Activated CD4-positive, alpha-beta T cell treated with anti-CD3 and anti-CD28 coated beads for 36 hours (primary cell): ENCODE measurements at regions of chr16 and their contacts with region 1.

Region 1: DNA sequence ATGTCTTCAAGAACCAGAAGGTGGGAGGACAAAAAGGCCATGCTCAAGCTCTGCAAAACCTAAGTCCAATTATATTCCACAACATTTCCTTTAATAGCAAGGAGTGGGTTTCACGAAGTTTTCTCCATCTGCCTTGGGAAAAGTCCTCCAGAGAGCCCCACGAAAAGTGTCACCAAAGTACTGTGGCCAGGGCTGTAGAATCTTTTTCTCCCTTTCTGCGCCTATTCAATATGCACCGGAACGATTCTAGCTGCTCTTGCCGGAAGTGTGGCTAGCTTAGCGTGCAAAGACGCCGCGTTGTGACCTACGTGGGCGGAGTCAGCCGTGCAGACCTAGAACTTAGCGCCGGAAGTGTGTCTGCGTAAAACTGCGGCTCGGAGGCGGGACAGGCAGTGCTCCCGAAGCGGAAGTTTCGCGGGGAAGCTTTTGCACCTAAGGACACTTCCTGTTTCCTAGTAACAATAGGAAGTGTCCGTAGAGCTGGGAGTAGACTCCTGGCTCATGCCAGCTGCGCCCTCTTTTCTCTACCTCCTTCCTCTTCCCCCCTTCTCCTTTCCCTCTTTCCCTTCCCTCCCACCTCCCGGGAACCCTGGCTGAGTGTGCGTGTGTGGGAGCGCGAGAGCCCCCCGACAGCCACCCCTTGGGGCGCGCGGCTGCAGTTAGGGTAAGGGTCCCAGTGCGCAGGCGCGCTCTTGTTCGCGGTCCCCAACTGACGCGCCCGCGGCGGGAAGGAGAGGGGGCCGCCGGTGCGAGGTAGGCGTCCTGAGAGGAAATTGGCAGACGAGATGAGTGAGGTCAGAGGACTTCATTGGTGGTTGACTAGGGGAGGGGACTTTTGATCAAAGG is at the starts of genes ZNF646 and ZNF668:
- DNase-seq: peak; percentile 99
- ATAC-seq: peak; percentile 83
- H3K4me3 Mint-ChIP-seq: peak within 1 kb of the TSS; percentile 97
- H3K27ac Mint-ChIP-seq: peak within 1 kb of the TSS; percentile 98
- H3K4me1 Mint-ChIP-seq: peaks cover 30% of the 10 kb centered on the region
- H3K27me3 Mint-ChIP-seq: no peaks in the 10 kb centered on the region
- total RNA-seq, gene ZNF646: 21.3 to 25.8 TPM
- total RNA-seq, gene ZNF668: 9.2 to 9.9 TPM

Region 2: DNA sequence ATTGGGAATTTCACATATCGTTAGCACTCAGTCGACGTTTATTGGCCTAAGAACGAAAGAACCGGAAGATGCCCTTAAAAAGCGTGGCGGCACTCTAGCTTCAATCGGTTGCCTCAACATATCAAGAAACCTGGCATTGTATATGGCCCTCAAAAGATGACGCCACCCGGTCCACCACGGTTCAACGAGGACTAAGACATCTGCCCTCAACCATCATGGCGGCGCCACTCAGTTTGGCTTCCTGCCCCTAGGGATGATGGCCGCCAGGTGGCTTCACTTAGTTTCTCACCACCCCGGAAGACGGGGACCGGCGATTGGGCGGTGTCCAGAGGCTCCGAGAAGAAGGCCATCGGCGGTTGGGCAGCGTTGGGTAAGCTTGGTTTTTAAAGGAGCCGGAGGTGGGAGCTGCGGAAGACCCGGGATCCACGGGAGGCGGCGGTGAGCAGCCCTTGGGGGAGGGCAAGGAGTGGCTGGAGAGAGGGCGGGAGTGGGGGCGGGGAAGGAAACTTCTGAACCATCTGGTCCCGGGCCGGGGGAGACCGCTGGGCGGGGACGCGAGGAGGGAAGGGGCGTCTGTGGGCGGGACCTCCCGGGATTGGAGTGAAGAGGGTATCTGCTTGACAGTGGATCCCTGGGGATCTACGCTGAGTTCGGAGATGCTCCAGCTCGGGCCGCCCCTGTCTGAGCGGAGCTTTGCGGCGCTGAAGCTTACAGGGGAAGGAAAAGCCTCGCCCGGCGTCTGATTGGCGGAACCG is 423.6 kb before region 1 on chr16 and contains the start of gene PRR14:
- CTCF ChIA-PET with region 1: no interaction called
- POLR2A ChIA-PET with region 1: no interaction called
- intact Hi-C with region 1: loop called in 1 of 2 experiments (anchors 2 kb)
- DNase-seq: peak; percentile 100
- ATAC-seq: peak; percentile 82
- H3K4me3 Mint-ChIP-seq: peak within 1 kb of the TSS; percentile 95
- H3K27ac Mint-ChIP-seq: peak within 1 kb of the TSS; percentile 97
- H3K4me1 Mint-ChIP-seq: peaks cover 21% of the 10 kb centered on the region
- H3K27me3 Mint-ChIP-seq: no peaks in the 10 kb centered on the region
- total RNA-seq, gene PRR14: 76.8 to 77.8 TPM

Region 3: GRCh38 chr16:30874821-30875717 is 199.1 kb before region 1 on chr16:
- CTCF ChIA-PET with region 1: no interaction called
- POLR2A ChIA-PET with region 1: no interaction called
- intact Hi-C with region 1: loop called in 1 of 2 experiments (anchors 1 kb)
- DNase-seq: peak; percentile 94
- ATAC-seq: peak; percentile 82
- H3K4me3 Mint-ChIP-seq: peak overlapping the region; percentile 87
- H3K27ac Mint-ChIP-seq: peak overlapping the region; percentile 93
- H3K4me1 Mint-ChIP-seq: peaks cover 24% of the 10 kb centered on the region
- H3K27me3 Mint-ChIP-seq: no peaks in the 10 kb centered on the region

Region 4: DNA sequence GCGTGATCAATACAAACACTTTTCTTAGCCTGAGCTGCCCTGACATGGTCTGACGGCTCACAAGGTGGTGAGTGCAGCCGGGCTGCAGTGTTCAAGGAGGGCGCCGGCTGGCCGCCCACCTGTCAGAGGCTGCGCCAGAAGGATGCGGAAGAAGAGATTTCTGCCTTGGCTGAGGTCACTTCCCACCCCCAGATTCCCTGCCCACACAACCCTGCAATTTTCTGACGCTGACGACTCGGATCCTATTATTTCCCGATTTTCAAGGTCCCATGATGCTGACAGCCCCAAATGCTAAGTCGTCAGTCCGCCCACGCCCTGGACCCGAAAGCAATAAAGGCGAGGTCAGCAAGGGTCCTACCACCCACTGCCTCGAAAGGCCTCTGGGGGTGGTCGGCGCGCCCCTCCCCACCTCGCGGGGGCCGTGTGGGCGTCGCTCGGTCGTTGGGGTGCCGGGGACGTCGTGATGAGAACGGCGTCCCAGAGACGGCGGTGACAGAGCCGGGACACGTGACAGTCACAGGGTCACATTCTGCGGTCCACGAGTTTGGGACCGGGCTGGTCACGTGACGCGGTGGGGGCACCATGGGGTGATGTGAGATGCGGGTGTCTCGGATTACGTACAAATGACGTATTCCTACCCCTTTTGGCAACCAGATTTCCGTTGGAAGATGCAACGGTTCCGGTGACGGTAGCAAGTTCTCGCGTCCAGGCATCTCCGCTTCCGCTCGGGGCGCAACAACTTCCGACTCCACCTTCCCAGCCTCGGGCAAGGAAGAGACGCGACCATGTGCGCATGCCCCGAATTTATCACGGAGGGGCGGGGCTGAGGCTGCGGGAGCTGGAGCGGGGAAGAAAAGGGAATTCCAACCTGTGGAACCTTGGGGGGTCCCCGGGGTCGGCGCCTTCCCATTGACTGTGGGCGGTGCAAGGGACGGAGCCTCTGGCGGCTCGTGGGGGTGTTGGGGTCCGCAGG is 41.2 kb before region 1 on chr16 and contains the start of gene STX4:
- CTCF ChIA-PET with region 1: interaction called, 7 read pairs
- POLR2A ChIA-PET with region 1: interaction called, 7 read pairs
- intact Hi-C with region 1: loop called (anchors 1 kb)
- DNase-seq: peak; percentile 99
- ATAC-seq: peak; percentile 89
- H3K4me3 Mint-ChIP-seq: peak within 1 kb of the TSS; percentile 96
- H3K27ac Mint-ChIP-seq: peak within 1 kb of the TSS; percentile 93
- H3K4me1 Mint-ChIP-seq: peaks cover 15% of the 10 kb centered on the region
- H3K27me3 Mint-ChIP-seq: no peaks in the 10 kb centered on the region
- total RNA-seq, gene STX4: 29.2 to 35.9 TPM

Region 5: GRCh38 chr16:31142109-31143010 is 68.2 kb after region 1 on chr16:
- CTCF ChIA-PET with region 1: interaction called, 15 read pairs
- POLR2A ChIA-PET with region 1: interaction called, 6 read pairs
- intact Hi-C with region 1: loop called (anchors 1 kb)
- DNase-seq: peak; percentile 100
- ATAC-seq: peak; percentile 96
- H3K4me3 Mint-ChIP-seq: peak overlapping the region; percentile 62
- H3K27ac Mint-ChIP-seq: peak overlapping the region; percentile 80
- H3K4me1 Mint-ChIP-seq: peaks cover 12% of the 10 kb centered on the region
- H3K27me3 Mint-ChIP-seq: no peaks in the 10 kb centered on the region

Region 6: DNA sequence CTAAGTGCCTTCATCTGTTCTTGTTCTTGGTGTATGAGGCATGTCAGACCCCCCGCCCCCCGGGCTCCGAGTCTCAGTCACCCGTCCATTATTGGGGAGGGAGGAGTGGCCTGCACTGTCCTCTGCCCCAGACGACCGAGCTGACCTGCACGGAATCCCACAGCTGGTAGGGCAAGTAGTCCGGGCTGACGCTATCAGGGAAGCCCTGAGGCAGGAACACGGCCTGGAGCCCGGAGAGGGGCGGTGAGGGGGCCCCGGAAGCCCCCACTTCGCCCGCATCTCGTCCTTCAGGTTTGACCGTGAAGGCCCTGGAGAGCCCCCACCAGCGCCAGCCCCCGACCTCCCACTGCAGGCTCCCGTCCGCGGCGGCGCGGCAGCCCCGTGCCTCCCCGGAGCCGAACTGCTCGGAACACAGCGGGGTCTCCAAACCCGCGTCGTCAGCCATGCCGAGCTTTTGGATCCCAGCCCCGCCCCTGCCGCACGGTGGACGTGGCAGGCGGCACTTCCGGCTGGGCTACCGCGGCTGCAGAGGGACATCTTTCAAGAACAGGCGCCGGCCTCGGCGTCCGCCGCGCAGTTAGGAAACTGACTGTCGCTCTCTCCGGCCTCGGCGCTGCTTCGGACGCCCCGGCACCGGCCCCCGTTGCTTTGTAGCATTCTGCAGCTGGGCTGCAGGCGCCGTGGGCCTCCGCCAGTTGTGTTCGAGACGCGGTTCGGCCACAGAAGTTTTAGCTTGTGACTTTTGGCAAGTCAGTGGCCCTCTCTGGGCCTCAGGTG is 433.9 kb after region 1 on chr16 and contains the start of gene RUSF1:
- CTCF ChIA-PET with region 1: no interaction called
- POLR2A ChIA-PET with region 1: no interaction called
- intact Hi-C with region 1: loop called in 1 of 2 experiments (anchors 1 kb)
- DNase-seq: peak; percentile 94
- ATAC-seq: peak; percentile 77
- H3K4me3 Mint-ChIP-seq: peak within 1 kb of the TSS; percentile 88
- H3K27ac Mint-ChIP-seq: peak within 1 kb of the TSS; percentile 98
- H3K4me1 Mint-ChIP-seq: peaks cover 47% of the 10 kb centered on the region
- H3K27me3 Mint-ChIP-seq: no peaks in the 10 kb centered on the region
- total RNA-seq, gene RUSF1: 36.3 to 37.7 TPM